Esophagus muscularis mucosa (tissue), 4 donors: ENCODE measurements at regions of chr21 and their contacts with region 1.

Region 1: GRCh38 chr21:45439161-45439872 is 34.4 kb downstream of the COL18A1 start:
- DNase-seq: peak; percentile 95
- H3K4me3 ChIP-seq: peak overlapping the region; percentile 42 to 54 (median 45)
- H3K27ac ChIP-seq: peak overlapping the region; percentile 70 to 83 (median 72)
- H3K4me1 ChIP-seq: peaks cover 20 to 40% (median 34%) of the 10 kb centered on the region in 4 donors
- H3K27me3 ChIP-seq: no peaks in the 10 kb centered on the region
- CTCF ChIP-seq: peak; percentile 98 to 99 (median 99)
- EP300 ChIP-seq: no peak
- POLR2A ChIP-seq: no peak

Region 2: GRCh38 chr21:45152265-45152746 is 287.0 kb before region 1 on chr21:
- intact Hi-C with region 1: loop called (anchors 10 kb)
- DNase-seq: no peak
- H3K4me3 ChIP-seq: no peak overlapping the region
- H3K27ac ChIP-seq: peak overlapping the region in 3 of 4 donors; percentile 43 to 67 (median 55)
- H3K4me1 ChIP-seq: peaks cover 11 to 70% (median 48%) of the 10 kb centered on the region in 4 donors
- H3K27me3 ChIP-seq: no peaks in the 10 kb centered on the region
- CTCF ChIP-seq: peak; percentile 15 to 34 (median 24)
- EP300 ChIP-seq: no peak
- POLR2A ChIP-seq: no peak

Region 3: DNA sequence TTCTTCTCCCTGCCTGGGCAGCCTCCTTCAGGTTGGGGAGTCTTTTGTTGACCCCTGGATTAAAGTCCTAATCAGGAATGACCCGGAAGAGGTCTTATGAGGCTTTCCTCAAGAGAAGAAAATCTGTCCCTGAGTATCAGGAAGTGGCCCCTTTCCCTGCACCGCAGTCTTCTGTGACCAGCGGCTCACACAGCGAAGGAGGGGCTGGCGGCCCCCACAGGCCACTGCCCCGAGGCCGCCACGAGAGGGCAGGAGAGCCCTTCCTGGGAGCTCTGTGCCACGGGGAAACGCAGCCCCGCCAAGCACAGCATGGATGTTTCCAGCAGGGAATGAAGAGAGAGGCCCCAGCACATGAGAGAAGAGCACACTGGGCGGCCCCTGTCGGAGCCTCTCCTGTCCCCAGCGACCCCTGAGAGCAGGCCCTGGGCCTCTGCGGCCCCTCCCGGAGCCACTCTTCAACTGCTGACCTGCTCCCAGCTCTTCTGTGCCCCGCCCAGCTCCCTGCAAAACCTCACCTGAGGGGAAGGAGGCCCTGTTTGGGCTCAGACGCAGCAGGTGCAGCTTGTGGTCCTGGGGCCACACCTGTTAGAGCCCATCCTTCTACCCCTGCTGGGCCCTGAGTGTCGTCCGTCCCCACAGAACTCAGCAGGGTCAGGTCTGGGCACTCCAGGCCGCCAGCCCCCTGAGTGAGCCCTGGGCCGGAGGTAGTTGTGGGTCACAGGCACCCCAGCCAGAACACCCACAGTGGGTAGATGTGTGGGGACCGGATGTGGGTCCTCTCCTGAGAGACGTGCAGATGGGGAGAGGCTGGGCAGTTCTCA is 146.7 kb before region 1 on chr21:
- intact Hi-C with region 1: loop called (anchors 1 kb)
- DNase-seq: peak; percentile 95
- H3K4me3 ChIP-seq: peak overlapping the region in 1 of 4 donors; percentile 18
- H3K27ac ChIP-seq: peak overlapping the region; percentile 85 to 93 (median 90)
- H3K4me1 ChIP-seq: peaks cover 46 to 67% (median 63%) of the 10 kb centered on the region in 4 donors
- H3K27me3 ChIP-seq: no peaks in the 10 kb centered on the region
- CTCF ChIP-seq: peak in 2 of 3 experiments; percentile 99 to 100
- EP300 ChIP-seq: no peak
- POLR2A ChIP-seq: no peak

Region 4: DNA sequence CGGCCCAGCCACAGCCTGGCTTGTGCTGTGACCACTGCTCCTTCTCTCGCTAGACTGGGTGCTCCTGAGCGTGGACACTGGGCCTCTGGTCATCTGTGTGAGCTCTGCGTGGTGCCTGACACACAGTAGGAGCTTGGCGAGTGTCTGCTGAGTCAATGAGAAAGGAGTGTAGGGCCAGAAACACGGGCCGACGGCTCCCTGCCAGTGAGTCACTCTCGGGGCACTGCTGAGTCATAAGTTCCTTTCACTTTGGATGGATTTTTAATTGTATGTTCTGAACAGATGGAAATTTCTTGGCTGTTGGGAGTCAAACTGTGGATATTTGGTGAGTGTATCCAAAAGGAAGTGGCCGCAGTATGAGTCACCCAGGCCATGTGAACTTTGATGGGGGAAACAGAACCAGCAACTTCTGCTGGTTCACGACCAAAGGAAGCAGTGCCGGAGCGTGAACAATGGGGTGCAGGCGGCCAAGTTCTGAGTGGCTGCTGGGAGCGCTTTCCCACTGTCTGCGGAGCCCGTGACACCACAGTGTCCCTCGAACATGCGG is 75.3 kb before region 1 on chr21:
- intact Hi-C with region 1: no loop called
- DNase-seq: peak; percentile 97
- H3K4me3 ChIP-seq: peak overlapping the region; percentile 10 to 34 (median 20)
- H3K27ac ChIP-seq: peak overlapping the region; percentile 89 to 96 (median 94)
- H3K4me1 ChIP-seq: peaks cover 33 to 58% (median 56%) of the 10 kb centered on the region in 4 donors
- H3K27me3 ChIP-seq: no peaks in the 10 kb centered on the region
- CTCF ChIP-seq: no peak
- EP300 ChIP-seq: peak; percentile 28
- POLR2A ChIP-seq: no peak

Region 5: DNA sequence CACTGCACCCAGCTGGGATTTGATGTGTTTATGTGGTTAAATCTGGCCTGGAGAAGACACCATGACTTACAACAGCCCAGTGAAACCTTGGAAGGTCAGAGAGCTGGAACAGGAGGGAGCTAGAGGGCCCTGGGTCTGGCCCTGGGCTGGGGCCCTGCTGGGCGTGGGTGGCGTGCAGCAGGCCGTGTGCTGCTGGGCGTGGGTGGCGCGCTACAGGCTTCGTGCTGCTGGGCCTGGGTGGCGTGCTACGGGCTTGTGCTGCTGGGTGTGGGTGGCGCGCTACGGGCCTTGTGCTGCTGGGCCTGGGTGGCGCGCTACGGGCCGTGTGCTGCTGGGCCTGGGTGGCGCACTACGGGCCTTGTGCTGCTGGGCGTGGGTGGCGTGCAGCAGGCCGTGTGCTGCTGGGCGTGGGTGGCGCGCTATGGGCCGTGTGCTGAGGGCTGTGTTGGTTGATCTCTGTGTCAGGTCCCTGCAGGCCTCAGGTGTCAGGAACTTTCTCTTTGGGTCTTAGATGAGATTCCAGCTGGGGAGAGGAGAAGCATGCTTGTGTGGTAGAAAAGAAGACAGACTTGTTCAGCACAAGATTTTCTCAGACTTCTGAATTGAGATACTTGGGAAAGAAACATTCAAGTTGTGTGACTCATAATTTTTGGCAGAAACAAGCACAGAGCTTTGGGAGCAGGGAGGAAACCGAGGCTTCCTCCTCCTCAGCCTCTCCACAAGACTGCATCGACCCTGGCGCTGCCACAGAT is 31.6 kb after region 1 on chr21:
- intact Hi-C with region 1: no loop called
- DNase-seq: no peak
- H3K4me3 ChIP-seq: peak overlapping the region; percentile 6 to 45 (median 21)
- H3K27ac ChIP-seq: peak overlapping the region; percentile 73 to 88 (median 82)
- H3K4me1 ChIP-seq: peaks cover 18 to 56% (median 45%) of the 10 kb centered on the region in 4 donors
- H3K27me3 ChIP-seq: no peaks in the 10 kb centered on the region
- CTCF ChIP-seq: no peak
- EP300 ChIP-seq: no peak
- POLR2A ChIP-seq: no peak

Region 6: GRCh38 chr21:45508607-45509565 is 69.6 kb after region 1 on chr21:
- intact Hi-C with region 1: no loop called
- DNase-seq: no peak
- H3K4me3 ChIP-seq: no peak overlapping the region
- H3K27ac ChIP-seq: no peak overlapping the region
- H3K4me1 ChIP-seq: no peaks in the 10 kb centered on the region
- H3K27me3 ChIP-seq: peaks cover 0 to 3% (median 0%) of the 10 kb centered on the region in 4 donors
- CTCF ChIP-seq: no peak
- EP300 ChIP-seq: no peak
- POLR2A ChIP-seq: no peak

Region 7: GRCh38 chr21:45542242-45542666 is 102.9 kb after region 1 on chr21 and contains the start of gene SLC19A1:
- intact Hi-C with region 1: no loop called
- DNase-seq: no peak
- H3K4me3 ChIP-seq: peak within 1 kb of the TSS; percentile 73 to 92 (median 79)
- H3K27ac ChIP-seq: peak within 1 kb of the TSS; percentile 61 to 78 (median 70)
- H3K4me1 ChIP-seq: peaks cover 12 to 25% (median 19%) of the 10 kb centered on the region in 4 donors
- H3K27me3 ChIP-seq: no peaks in the 10 kb centered on the region
- CTCF ChIP-seq: peak; percentile 41 to 61 (median 59)
- EP300 ChIP-seq: no peak
- POLR2A ChIP-seq: no peak
- total RNA-seq, gene SLC19A1: 2.8 to 10.0 (median 6.6) TPM